ENCODE measurements at regions of chr10 and their contacts with region 1.

Region 1: GRCh38 chr10:114638821-114639625 is 19.1 kb downstream of the ABLIM1 start:
- DNase-seq: no peak
- ATAC-seq: peak; percentile 54
- H3K4me3 ChIP-seq: no peak overlapping the region
- H3K27ac ChIP-seq: peak overlapping the region; percentile 96
- H3K4me1 ChIP-seq: peaks cover 89% of the 10 kb centered on the region
- H3K27me3 ChIP-seq: no peaks in the 10 kb centered on the region
- CTCF ChIP-seq: no peak

Region 2: GRCh38 chr10:114678820-114679219 is 39.8 kb after region 1 on chr10:
- CTCF ChIA-PET with region 1: interaction called, 17 read pairs
- POLR2A ChIA-PET with region 1: interaction called, 8 read pairs
- in situ Hi-C with region 1: no loop called
- intact Hi-C with region 1: loop called (anchors 5 kb)
- DNase-seq: no peak
- ATAC-seq: peak; percentile 55
- H3K4me3 ChIP-seq: no peak overlapping the region
- H3K27ac ChIP-seq: peak overlapping the region; percentile 100
- H3K4me1 ChIP-seq: peaks cover 61% of the 10 kb centered on the region
- H3K27me3 ChIP-seq: no peaks in the 10 kb centered on the region
- CTCF ChIP-seq: no peak

Region 3: GRCh38 chr10:114684085-114684821 is 45.2 kb after region 1 on chr10:
- CTCF ChIA-PET with region 1: interaction called, 17 read pairs
- POLR2A ChIA-PET with region 1: interaction called, 8 read pairs
- in situ Hi-C with region 1: no loop called
- intact Hi-C with region 1: loop called (anchors 5 kb)
- DNase-seq: no peak
- ATAC-seq: peak; percentile 74
- H3K4me3 ChIP-seq: peak overlapping the region; percentile 48 to 55
- H3K27ac ChIP-seq: peak overlapping the region; percentile 100
- H3K4me1 ChIP-seq: peaks cover 90% of the 10 kb centered on the region
- H3K27me3 ChIP-seq: no peaks in the 10 kb centered on the region
- CTCF ChIP-seq: no peak

Region 4: DNA sequence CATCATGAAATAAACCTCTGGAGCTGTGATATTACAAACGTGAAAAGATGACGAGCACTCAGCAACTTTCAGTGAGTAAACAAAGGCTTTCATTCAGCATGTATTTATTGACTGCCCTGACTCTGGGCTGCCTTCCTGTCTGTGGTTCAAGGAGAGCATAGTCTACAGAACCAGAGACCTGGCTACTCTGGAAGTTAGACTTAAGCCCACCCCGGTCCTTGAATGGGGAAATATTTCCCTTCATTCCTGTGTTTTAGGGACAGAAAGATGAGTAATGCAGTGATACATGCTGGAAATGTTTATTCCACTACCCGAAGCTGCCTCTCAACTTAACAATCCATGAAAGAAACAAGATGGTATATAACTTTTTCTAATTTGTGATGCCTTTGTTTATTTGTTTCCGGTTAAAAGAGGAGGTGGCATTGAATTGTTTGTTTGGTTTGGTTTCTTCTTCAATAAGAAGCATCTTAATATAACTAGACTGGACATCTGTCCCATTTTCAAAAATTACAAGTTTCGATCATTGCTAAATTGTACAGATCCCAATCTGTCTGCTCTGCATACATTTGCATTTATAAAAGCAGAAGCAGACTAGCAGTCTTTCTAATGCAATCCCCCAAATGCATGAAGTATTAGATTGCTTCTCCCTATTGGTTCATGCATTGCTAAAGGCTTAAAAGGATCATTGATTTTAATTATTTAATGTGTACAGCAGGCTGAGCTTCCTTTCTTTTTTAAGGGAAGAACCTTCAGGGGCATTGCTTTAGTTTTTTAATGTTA is 356.6 kb after region 1 on chr10:
- CTCF ChIA-PET with region 1: no interaction called
- POLR2A ChIA-PET with region 1: no interaction called
- in situ Hi-C with region 1: no loop called
- intact Hi-C with region 1: no loop called
- DNase-seq: no peak
- ATAC-seq: no peak
- H3K4me3 ChIP-seq: no peak overlapping the region
- H3K27ac ChIP-seq: no peak overlapping the region
- H3K4me1 ChIP-seq: no peaks in the 10 kb centered on the region
- H3K27me3 ChIP-seq: no peaks in the 10 kb centered on the region
- CTCF ChIP-seq: no peak

Measured in Panc1 (cell line).